ENCODE measurements at regions of chr1 and their contacts with region 1.

Region 1: GRCh38 chr1:244789731-244790130 is 45.7 kb upstream of the COX20 start:
- DNase-seq: no peak

Region 2: DNA sequence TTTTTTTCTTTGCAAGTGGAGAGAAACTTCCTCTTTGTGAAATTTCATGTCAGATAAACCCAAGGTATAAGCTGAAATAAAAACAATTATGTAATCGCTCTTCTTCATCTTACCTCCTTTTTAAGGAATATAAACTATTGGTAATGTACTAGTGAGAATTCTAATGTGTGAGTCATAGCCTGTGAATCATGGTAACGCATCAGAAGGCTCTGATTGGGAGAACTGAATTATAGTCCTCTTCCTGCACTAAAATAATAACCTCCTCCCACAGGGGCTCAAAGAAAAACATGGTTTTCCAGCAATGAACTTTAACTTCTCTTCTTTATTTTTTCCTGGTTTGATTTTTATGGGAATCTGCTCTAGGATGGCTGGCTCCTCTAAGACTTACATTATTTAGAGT is 11.4 kb before region 1 on chr1:
- CTCF ChIA-PET with region 1: no interaction called
- POLR2A ChIA-PET with region 1: no interaction called
- DNase-seq: no peak

Region 3: GRCh38 chr1:246497331-246497915 is 1707.7 kb after region 1 on chr1:
- CTCF ChIA-PET with region 1: interaction called, 10 read pairs
- POLR2A ChIA-PET with region 1: no interaction called
- DNase-seq: peak; percentile 18